ENCODE measurements at regions of chr1 and their contacts with region 1.

Region 1: GRCh38 chr1:210373885-210374599 is 45.3 kb downstream of the HHAT start:
- DNase-seq: peak; percentile 89
- H3K4me3 ChIP-seq: no peak overlapping the region
- CTCF ChIP-seq: peak; percentile 81

Region 2: GRCh38 chr1:210384630-210385029 is 10.6 kb after region 1 on chr1:
- CTCF ChIA-PET with region 1: interaction called, 64 read pairs
- POLR2A ChIA-PET with region 1: interaction called, 12 read pairs
- DNase-seq: no peak
- H3K4me3 ChIP-seq: no peak overlapping the region
- CTCF ChIP-seq: no peak

Region 3: DNA sequence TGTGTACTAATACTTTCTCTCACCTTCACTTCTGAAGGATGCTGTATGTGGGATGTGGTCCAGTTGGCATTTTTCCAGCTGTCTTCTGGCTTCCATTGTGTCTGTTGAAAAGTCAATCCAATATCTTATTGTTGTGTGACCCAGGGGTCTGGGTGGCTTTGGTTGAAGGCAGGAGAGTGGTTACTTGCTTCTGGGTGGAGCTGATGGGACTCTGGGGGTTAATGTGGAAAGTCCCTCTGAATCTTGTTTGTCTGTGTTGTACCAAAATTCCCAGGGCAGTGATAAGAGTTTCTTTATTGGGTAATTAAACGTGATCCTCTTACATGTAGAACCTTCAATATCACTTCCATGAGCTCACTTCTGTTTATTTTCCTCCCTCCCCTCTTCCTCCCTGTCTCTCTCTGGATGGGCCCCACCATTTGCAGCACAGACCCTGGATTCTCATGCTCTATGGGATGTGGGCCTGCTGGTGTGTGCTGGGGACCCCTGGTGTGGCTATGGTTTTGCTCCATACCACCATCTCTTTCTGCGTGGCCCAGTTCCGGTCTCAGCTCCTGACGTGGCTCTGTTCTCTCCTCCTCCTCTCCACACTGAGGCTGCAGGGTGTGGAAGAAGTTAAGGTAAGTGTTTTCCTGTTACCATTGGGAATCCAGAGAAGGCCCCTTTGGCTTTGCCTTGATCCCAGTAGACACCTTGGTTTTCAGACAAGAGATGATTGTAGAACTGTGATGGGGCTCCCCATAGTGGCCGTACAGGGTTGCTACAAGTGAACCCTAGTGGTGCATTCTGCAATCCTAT is 26.2 kb after region 1 on chr1:
- CTCF ChIA-PET with region 1: interaction called, 411 read pairs
- POLR2A ChIA-PET with region 1: interaction called, 27 read pairs
- DNase-seq: peak; percentile 38
- H3K4me3 ChIP-seq: no peak overlapping the region
- CTCF ChIP-seq: peak; percentile 86

Region 4: GRCh38 chr1:210415846-210416448 is 41.9 kb after region 1 on chr1:
- CTCF ChIA-PET with region 1: interaction called, 13 read pairs
- POLR2A ChIA-PET with region 1: no interaction called
- DNase-seq: no peak
- H3K4me3 ChIP-seq: no peak overlapping the region
- CTCF ChIP-seq: no peak

Region 5: GRCh38 chr1:210448297-210448892 is 74.4 kb after region 1 on chr1:
- CTCF ChIA-PET with region 1: interaction called, 13 read pairs
- POLR2A ChIA-PET with region 1: interaction called, 6 read pairs
- DNase-seq: peak; percentile 33
- H3K4me3 ChIP-seq: no peak overlapping the region
- CTCF ChIP-seq: peak; percentile 54

Region 6: GRCh38 chr1:210739627-210740026 is 365.6 kb after region 1 on chr1:
- CTCF ChIA-PET with region 1: no interaction called
- POLR2A ChIA-PET with region 1: no interaction called
- DNase-seq: no peak
- H3K4me3 ChIP-seq: no peak overlapping the region
- CTCF ChIP-seq: no peak

Measured in AG04449 (cell line).